Transverse colon (tissue), 4 donors: ENCODE measurements at regions of chr6 and their contacts with region 1.

Region 1: GRCh38 chr6:124703541-124703940 is 258.7 kb upstream of the RNF217 start:
- DNase-seq: no peak
- H3K4me3 ChIP-seq: no peak overlapping the region
- H3K27ac ChIP-seq: no peak overlapping the region
- H3K4me1 ChIP-seq: no peaks in the 10 kb centered on the region
- H3K27me3 ChIP-seq: no peaks in the 10 kb centered on the region
- CTCF ChIP-seq: no peak
- EP300 ChIP-seq: no peak
- POLR2A ChIP-seq: no peak

Region 2: GRCh38 chr6:124334359-124334758 is 369.2 kb before region 1 on chr6:
- in situ Hi-C with region 1: loop called in 1 of 4 experiments (anchors 10 kb)
- intact Hi-C with region 1: loop called (anchors 10 kb)
- DNase-seq: no peak
- H3K4me3 ChIP-seq: no peak overlapping the region
- H3K27ac ChIP-seq: no peak overlapping the region
- H3K4me1 ChIP-seq: no peaks in the 10 kb centered on the region
- H3K27me3 ChIP-seq: no peaks in the 10 kb centered on the region
- CTCF ChIP-seq: no peak
- EP300 ChIP-seq: no peak
- POLR2A ChIP-seq: no peak